HCT116 (cell line): ENCODE measurements at regions of chr11 and their contacts with region 1.

Region 1: DNA sequence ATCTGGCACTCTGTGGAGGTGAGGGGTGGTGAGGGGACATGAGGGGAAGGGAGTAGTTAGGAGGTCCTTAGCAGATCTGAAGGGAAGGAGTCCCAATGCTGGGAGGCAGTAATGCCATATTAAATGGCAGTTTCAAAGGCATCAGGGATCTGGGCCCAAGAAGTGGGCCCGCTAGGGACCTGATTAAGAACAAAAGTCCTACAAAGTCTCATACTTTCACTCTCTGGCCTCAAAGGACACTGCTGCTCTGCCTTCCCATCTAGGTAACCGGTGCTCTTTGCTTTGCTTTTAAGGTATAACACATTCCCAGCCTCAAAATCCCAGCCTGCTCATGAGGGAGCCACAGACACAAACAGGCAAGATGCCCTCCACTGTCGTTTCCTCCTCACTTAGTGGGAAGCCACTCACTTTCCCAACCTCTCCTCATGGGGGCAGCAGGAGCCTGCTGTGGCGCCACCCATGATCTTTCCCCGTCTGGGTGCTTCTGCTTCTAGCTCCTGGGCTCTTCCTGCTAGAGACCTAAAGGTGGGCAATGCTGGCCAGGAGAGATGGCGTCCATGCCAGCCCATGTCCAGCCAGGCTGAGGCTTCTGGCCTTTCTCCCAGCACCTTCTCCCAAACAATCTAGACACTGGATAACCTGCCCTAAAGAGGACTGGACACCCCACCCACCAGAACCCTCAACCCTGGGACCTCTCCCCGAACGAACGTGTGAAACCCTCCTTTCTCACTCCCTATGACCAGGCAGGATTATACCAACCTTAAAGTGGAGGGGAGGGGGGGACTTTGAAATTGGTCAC is 68.3 kb downstream of the PLEKHA7 start:
- DNase-seq: peak; percentile 51
- ATAC-seq: peak; percentile 99
- H3K4me3 ChIP-seq: no peak overlapping the region
- H3K27ac ChIP-seq: no peak overlapping the region
- H3K4me1 ChIP-seq: no peaks in the 10 kb centered on the region; a peak in 1 of 4 replicates
- H3K27me3 ChIP-seq: no peaks in the 10 kb centered on the region
- CTCF ChIP-seq: peak; percentile 77 to 88 (median 84)
- POLR2A ChIP-seq: no peak
- RAD21 ChIP-seq: peak; percentile 97

Region 2: DNA sequence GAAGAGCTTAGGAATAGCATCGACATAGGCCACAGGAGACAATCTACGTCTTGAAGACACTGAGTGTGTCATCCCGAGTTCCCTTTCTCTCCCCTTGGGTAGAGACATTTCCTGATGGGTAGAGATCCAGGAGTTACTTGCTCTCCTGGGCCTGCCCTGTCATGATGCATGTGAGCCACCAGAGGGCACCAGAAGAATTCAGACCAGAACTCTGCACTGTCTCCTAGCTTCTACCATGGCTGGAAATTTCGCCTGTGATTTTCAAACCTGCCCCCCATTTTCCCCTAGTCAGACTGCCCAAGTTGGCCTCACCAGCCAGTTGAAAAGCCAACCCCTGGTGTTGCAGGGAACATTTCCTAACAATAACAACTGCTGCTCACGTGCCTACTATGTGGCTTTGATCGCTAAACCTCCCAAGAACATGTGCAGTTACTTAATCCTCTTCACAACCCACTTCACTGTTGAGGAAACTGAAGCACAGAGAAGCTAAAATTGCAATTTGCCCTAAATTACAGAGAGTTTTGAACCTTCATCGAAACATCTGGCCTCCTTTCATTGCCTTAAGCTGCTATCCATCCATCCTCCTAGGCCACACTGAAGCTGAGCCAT is 160.2 kb before region 1 on chr11:
- CTCF ChIA-PET with region 1: no interaction called
- POLR2A ChIA-PET with region 1: no interaction called
- RAD21 ChIA-PET with region 1: no interaction called
- intact Hi-C with region 1: loop called (anchors 1 kb)
- DNase-seq: peak; percentile 54
- ATAC-seq: peak; percentile 78
- H3K4me3 ChIP-seq: no peak overlapping the region
- H3K27ac ChIP-seq: no peak overlapping the region
- H3K4me1 ChIP-seq: peaks cover 31 to 48% of the 10 kb centered on the region in 2 experiments
- H3K27me3 ChIP-seq: no peaks in the 10 kb centered on the region
- CTCF ChIP-seq: peak; percentile 84 to 94 (median 93)
- POLR2A ChIP-seq: no peak
- RAD21 ChIP-seq: peak; percentile 89

Region 3: DNA sequence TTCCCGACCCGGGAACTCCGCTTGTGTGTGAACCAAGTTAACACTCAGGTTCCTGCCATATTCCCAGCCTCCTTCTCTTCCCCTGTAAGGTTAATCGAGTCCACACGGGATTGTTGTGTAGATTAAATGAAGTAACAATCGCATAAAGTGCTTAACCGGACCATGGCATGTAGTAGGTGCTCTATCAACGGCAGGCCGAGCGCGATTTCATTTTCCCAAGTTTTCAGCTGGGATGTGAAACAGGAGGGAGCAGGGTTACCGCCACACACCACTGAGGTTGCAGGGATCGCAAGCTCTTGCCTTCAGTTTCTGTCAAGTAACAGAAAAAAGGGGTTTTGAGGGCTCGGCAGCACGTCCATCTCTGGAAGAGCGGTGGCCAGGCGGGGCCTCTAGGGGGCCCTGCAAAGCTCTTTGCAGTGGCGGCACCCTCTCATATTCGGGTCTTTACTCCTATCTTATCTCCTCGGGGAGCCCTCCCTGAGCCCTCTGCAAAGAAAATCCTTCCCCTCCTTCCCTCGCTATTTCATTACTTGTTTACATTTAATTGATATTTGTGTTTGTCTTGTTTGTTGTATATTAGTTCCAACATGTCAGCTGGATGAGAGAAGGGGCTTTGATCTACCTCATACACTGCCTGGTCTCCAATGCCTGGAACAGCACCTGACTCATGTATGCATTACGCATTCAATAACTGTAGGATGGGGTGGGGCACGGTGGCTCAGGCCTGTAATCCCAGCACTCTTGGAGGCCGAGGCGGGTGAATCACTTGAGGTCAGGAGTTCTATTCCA is 69.2 kb after region 1 on chr11:
- CTCF ChIA-PET with region 1: no interaction called
- POLR2A ChIA-PET with region 1: no interaction called
- RAD21 ChIA-PET with region 1: no interaction called
- intact Hi-C with region 1: loop called (anchors 2 kb)
- DNase-seq: peak; percentile 75
- ATAC-seq: peak; percentile 74
- H3K4me3 ChIP-seq: peak overlapping the region; percentile 65 to 69
- H3K27ac ChIP-seq: no peak overlapping the region
- H3K4me1 ChIP-seq: peaks cover 15 to 28% of the 10 kb centered on the region in 2 experiments
- H3K27me3 ChIP-seq: no peaks in the 10 kb centered on the region
- CTCF ChIP-seq: peak; percentile 19 to 87 (median 69); a peak in 4 of 6 replicates
- POLR2A ChIP-seq: no peak
- RAD21 ChIP-seq: peak; percentile 31; the same call in 1 of the 2 replicates

Region 4: DNA sequence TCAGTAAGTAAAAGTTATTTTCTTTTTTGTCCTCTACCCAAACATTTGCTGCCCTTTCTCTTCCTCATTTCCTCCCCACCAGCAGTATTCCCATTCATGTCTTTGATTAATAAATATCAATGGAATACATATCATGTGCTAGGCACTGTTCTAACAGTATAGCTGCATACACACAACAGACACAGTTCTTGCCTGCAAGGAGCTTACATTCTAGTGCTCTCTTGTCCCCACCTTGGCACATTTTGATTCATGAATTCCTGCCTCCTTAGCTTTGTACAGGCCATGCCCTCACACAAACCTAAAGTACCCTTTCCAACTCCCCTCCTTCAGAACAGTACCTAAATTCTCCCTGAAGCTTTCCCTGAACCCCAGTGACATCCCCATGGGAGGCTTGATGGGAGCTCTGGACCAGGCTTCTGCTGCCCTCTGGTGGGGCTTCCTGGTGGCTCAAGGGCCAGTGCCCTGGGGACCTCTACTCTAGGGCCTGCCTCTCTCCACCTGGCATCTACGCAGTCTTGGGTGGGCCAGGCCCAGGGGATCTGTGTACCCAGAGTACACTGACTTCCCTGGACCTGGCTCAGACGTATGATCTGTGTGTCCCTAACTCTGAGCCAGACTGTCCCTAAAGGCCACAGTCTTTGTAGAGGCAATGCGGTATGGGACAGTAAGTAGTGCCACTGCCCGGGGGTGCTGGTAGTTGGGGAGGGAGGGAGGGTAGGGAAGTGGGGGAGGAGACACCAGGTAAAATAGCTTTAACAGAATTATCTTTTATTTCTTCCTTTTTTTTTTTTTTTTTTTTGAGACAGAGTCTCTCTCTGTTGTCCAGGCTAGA is 117.5 kb after region 1 on chr11:
- CTCF ChIA-PET with region 1: interaction called, 30 read pairs
- POLR2A ChIA-PET with region 1: no interaction called
- RAD21 ChIA-PET with region 1: interaction called, 6 to 7 read pairs
- intact Hi-C with region 1: loop called (anchors 1 kb)
- DNase-seq: peak; percentile 42
- ATAC-seq: peak; percentile 99
- H3K4me3 ChIP-seq: no peak overlapping the region
- H3K27ac ChIP-seq: no peak overlapping the region
- H3K4me1 ChIP-seq: no peaks in the 10 kb centered on the region
- H3K27me3 ChIP-seq: no peaks in the 10 kb centered on the region
- CTCF ChIP-seq: peak; percentile 90 to 94 (median 90)
- POLR2A ChIP-seq: no peak
- RAD21 ChIP-seq: peak; percentile 97

Region 5: GRCh38 chr11:17504330-17505107 is 558.6 kb after region 1 on chr11:
- CTCF ChIA-PET with region 1: no interaction called
- POLR2A ChIA-PET with region 1: no interaction called
- RAD21 ChIA-PET with region 1: no interaction called
- intact Hi-C with region 1: loop called (anchors 10 kb)
- DNase-seq: peak; percentile 29
- ATAC-seq: peak; percentile 89
- H3K4me3 ChIP-seq: no peak overlapping the region
- H3K27ac ChIP-seq: no peak overlapping the region
- H3K4me1 ChIP-seq: peaks cover 5 to 12% of the 10 kb centered on the region in 2 experiments; a peak in 3 of 4 replicates
- H3K27me3 ChIP-seq: no peaks in the 10 kb centered on the region
- CTCF ChIP-seq: peak; percentile 91 to 92 (median 91)
- POLR2A ChIP-seq: no peak
- RAD21 ChIP-seq: peak; percentile 96